ENCODE measurements at regions of chr10 and their contacts with region 1.

Region 1: GRCh38 chr10:100338434-100339036 is 8.5 kb upstream of the SCD start:
- DNase-seq: peak; percentile 82
- H3K4me3 ChIP-seq: no peak overlapping the region
- H3K27ac ChIP-seq: no peak overlapping the region
- H3K4me1 ChIP-seq: no peaks in the 10 kb centered on the region
- H3K27me3 ChIP-seq: no peaks in the 10 kb centered on the region
- CTCF ChIP-seq: peak; percentile 90

Region 2: DNA sequence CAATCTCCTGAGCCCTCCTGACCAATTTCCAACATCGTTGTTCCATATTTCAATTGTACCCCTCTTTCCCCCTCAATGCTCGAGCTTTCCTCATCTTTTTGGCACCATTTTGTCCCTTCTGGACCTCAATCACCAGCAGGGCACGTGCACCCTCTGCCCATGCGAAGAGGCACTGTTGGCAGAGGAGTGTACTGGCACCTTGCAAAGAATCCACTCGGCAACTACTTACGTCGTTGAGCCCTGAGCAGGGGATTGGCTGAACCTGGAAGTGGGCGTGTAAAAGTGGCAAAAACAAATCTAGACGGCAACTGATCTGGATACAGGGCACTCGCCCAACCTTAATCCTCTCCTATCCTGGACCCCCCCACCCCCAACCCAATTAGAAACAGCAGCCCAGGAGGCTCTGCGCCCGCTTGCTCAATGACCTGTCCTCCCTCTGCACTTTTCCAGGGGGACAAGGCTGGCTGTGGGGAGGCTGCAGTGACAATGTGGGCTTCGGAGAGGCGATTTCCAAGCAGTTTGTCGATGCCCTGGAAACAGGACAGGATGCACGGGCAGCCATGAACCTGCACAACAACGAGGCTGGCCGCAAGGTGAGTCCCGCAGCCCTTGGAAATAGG is 143.0 kb after region 1 on chr10:
- intact Hi-C with region 1: no loop called
- DNase-seq: peak; percentile 92
- H3K4me3 ChIP-seq: peak overlapping the region; percentile 45
- H3K27ac ChIP-seq: no peak overlapping the region
- H3K4me1 ChIP-seq: peaks cover 5% of the 10 kb centered on the region
- H3K27me3 ChIP-seq: peaks cover 16% of the 10 kb centered on the region
- CTCF ChIP-seq: no peak

Region 3: GRCh38 chr10:100518761-100519241 is 180.3 kb after region 1 on chr10:
- intact Hi-C with region 1: loop called (anchors 5 kb)
- DNase-seq: peak; percentile 80
- H3K4me3 ChIP-seq: peak overlapping the region; percentile 37
- H3K27ac ChIP-seq: no peak overlapping the region
- H3K4me1 ChIP-seq: no peaks in the 10 kb centered on the region
- H3K27me3 ChIP-seq: peaks cover 3% of the 10 kb centered on the region
- CTCF ChIP-seq: peak; percentile 55

Measured in colonic mucosa (tissue), 4 donors.